PC-3 (cell line): ENCODE measurements at regions of chr3 and their contacts with region 1.

Region 1: GRCh38 chr3:14124615-14125190 is at the starts of genes CHCHD4 and TMEM43:
- DNase-seq: peak; percentile 99
- ATAC-seq: peak; percentile 80
- H3K4me3 ChIP-seq: peak within 1 kb of the TSS; percentile 87
- H3K27ac ChIP-seq: peak within 1 kb of the TSS; percentile 55
- H3K4me1 ChIP-seq: peaks cover 23% of the 10 kb centered on the region
- H3K27me3 ChIP-seq: no peaks in the 10 kb centered on the region
- CTCF ChIP-seq: no peak
- total RNA-seq, gene CHCHD4: 39.5 and 43.3 TPM in 2 replicates
- total RNA-seq, gene TMEM43: 78.6 and 83.1 TPM in 2 replicates

Region 2: GRCh38 chr3:13648060-13649001 is 476.4 kb before region 1 on chr3:
- CTCF ChIA-PET with region 1: no interaction called
- POLR2A ChIA-PET with region 1: no interaction called
- intact Hi-C with region 1: loop called (anchors 10 kb)
- DNase-seq: peak; percentile 94
- ATAC-seq: peak; percentile 77
- H3K4me3 ChIP-seq: peak overlapping the region; percentile 66
- H3K27ac ChIP-seq: peak overlapping the region; percentile 69
- H3K4me1 ChIP-seq: peaks cover 33% of the 10 kb centered on the region
- H3K27me3 ChIP-seq: no peaks in the 10 kb centered on the region
- CTCF ChIP-seq: peak; percentile 99

Region 3: GRCh38 chr3:13895155-13896105 is 229.3 kb before region 1 on chr3:
- CTCF ChIA-PET with region 1: interaction called, 15 read pairs
- POLR2A ChIA-PET with region 1: no interaction called
- intact Hi-C with region 1: loop called (anchors 2 kb)
- DNase-seq: peak; percentile 95
- ATAC-seq: peak; percentile 98
- H3K4me3 ChIP-seq: peak overlapping the region; percentile 79
- H3K27ac ChIP-seq: no peak overlapping the region
- H3K4me1 ChIP-seq: peaks cover 23% of the 10 kb centered on the region
- H3K27me3 ChIP-seq: no peaks in the 10 kb centered on the region
- CTCF ChIP-seq: no peak

Region 4: GRCh38 chr3:14057701-14058100 is 67.0 kb before region 1 on chr3:
- CTCF ChIA-PET with region 1: no interaction called
- POLR2A ChIA-PET with region 1: no interaction called
- intact Hi-C with region 1: no loop called
- DNase-seq: peak; percentile 29
- ATAC-seq: no peak; the same call in 1 of the 2 replicates
- H3K4me3 ChIP-seq: no peak overlapping the region
- H3K27ac ChIP-seq: no peak overlapping the region
- H3K4me1 ChIP-seq: no peaks in the 10 kb centered on the region; the same call in 1 of the 2 replicates
- H3K27me3 ChIP-seq: peaks cover 14% of the 10 kb centered on the region; the same call in 1 of the 2 replicates
- CTCF ChIP-seq: no peak

Region 5: DNA sequence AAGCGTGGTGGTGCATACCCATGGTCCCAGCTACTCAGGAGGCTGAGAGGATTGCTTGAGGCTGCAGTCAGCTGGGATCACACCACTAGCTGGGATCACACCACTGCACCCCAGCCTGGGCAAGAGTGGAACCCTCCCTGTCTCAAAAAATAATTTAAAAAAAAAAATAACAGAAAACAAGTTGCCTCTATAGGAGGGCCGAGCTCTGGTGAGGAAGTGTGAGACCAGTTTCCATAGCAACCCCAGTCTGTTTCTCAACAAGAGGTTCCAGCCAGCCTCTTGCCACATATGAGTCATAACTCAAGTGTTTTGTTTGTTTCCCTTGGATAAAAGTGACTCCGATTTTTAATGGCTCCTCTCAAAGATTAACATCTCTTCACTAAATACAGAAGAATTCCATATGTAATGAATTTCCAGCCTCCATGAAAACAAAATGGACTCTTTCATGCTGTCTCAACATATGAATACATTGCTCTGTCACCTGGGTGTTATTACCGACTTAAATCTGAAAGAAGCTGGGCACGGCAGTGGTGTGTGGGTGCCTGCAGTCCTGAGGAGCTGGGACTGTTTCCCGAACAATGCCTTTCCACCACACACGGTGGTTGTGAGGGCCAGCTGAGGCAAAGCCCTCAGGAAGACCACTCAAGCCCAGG is 19.8 kb after region 1 on chr3:
- CTCF ChIA-PET with region 1: interaction called, 4 read pairs
- POLR2A ChIA-PET with region 1: interaction called, 13 read pairs
- intact Hi-C with region 1: loop called (anchors 1 kb)
- DNase-seq: peak; percentile 98
- ATAC-seq: peak; percentile 75
- H3K4me3 ChIP-seq: peak overlapping the region; percentile 17; the same call in 1 of the 2 replicates
- H3K27ac ChIP-seq: peak overlapping the region; percentile 94
- H3K4me1 ChIP-seq: peaks cover 32% of the 10 kb centered on the region
- H3K27me3 ChIP-seq: no peaks in the 10 kb centered on the region
- CTCF ChIP-seq: no peak

Region 6: DNA sequence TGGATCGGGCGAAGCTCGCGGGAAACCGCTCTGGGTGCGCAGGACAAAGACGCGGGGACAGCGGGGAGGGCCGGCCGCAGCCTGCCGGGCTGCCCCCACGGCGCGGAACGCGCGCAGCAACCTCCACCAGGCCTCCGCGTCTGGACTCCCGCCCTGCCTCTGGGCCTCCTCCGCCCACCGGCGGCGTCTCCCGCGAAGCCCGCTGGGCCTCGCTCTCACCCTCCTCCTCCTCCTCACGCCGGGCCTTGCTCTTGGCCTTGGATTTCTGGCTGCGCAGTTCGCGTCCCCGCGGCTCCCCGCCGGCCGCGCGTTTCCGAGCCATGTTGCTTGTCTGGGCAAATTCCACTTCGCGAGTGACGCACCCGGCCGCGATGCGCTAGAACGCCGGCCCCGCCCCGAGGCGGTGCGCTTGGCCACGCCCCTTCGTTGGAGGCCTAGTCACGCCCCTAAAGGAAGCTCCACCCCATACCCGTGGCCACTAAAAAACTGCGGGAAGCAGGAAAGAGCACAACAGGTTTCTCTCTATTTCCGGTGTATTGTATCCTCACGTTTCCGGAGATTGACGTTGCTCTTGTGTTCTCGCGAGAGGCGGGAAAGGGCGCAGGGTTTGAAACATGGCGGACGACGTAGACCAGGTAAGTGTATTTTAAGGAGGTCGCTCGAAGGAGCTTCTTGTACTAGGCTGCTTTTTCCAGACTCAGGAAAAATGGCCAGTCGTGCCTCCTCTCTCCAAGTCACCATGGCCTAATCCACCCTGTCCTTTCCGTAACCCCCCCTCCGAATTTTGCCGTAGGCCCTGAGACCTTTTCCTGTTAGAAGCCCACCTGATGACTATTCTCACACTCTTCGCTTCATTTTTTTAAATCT is 53.8 kb after region 1 on chr3 and contains the starts of genes LSM3 and XPC:
- CTCF ChIA-PET with region 1: no interaction called
- POLR2A ChIA-PET with region 1: interaction called, 20 read pairs
- intact Hi-C with region 1: loop called (anchors 1 kb)
- DNase-seq: peak; percentile 99
- ATAC-seq: peak; percentile 95
- H3K4me3 ChIP-seq: peak within 1 kb of the TSS; percentile 74
- H3K27ac ChIP-seq: peak within 1 kb of the TSS; percentile 39
- H3K4me1 ChIP-seq: peaks cover 31% of the 10 kb centered on the region
- H3K27me3 ChIP-seq: no peaks in the 10 kb centered on the region
- CTCF ChIP-seq: no peak
- total RNA-seq, gene LSM3: 22.0 and 27.2 TPM in 2 replicates
- total RNA-seq, gene XPC: 24.3 and 26.1 TPM in 2 replicates